Activated CD4-positive, alpha-beta T cell treated with anti-CD3 and anti-CD28 coated beads for 36 hours (primary cell): ENCODE measurements at regions of chr22 and their contacts with region 1.

Region 1: GRCh38 chr22:19576460-19577421 is 52.5 kb upstream of the CLDN5 start:
- DNase-seq: peak; percentile 86
- ATAC-seq: peak; percentile 88
- H3K4me3 Mint-ChIP-seq: peak overlapping the region; percentile 22
- H3K27ac Mint-ChIP-seq: peak overlapping the region; percentile 91
- H3K4me1 Mint-ChIP-seq: peaks cover 45% of the 10 kb centered on the region
- H3K27me3 Mint-ChIP-seq: no peaks in the 10 kb centered on the region

Region 2: GRCh38 chr22:19432133-19432851 is 144.4 kb before region 1 on chr22 and contains the start of gene MRPL40:
- CTCF ChIA-PET with region 1: no interaction called
- POLR2A ChIA-PET with region 1: no interaction called
- intact Hi-C with region 1: no loop called
- DNase-seq: peak; percentile 94
- ATAC-seq: peak; percentile 86
- H3K4me3 Mint-ChIP-seq: peak within 1 kb of the TSS; percentile 75
- H3K27ac Mint-ChIP-seq: peak within 1 kb of the TSS; percentile 96
- H3K4me1 Mint-ChIP-seq: peaks cover 43% of the 10 kb centered on the region
- H3K27me3 Mint-ChIP-seq: no peaks in the 10 kb centered on the region
- total RNA-seq, gene MRPL40: 34.1 to 34.4 TPM

Region 3: GRCh38 chr22:19543970-19544708 is 32.6 kb before region 1 on chr22:
- CTCF ChIA-PET with region 1: no interaction called
- POLR2A ChIA-PET with region 1: no interaction called
- intact Hi-C with region 1: no loop called
- DNase-seq: no peak
- ATAC-seq: no peak
- H3K4me3 Mint-ChIP-seq: no peak overlapping the region
- H3K27ac Mint-ChIP-seq: no peak overlapping the region
- H3K4me1 Mint-ChIP-seq: no peaks in the 10 kb centered on the region
- H3K27me3 Mint-ChIP-seq: peaks cover 2% of the 10 kb centered on the region

Region 4: GRCh38 chr22:19598054-19598855 is 21.5 kb after region 1 on chr22:
- CTCF ChIA-PET with region 1: interaction called, 3 read pairs
- POLR2A ChIA-PET with region 1: no interaction called
- intact Hi-C with region 1: loop called in 1 of 2 experiments (anchors 1 kb)
- DNase-seq: peak; percentile 49
- ATAC-seq: peak; percentile 31
- H3K4me3 Mint-ChIP-seq: no peak overlapping the region
- H3K27ac Mint-ChIP-seq: peak overlapping the region; percentile 89
- H3K4me1 Mint-ChIP-seq: peaks cover 61% of the 10 kb centered on the region
- H3K27me3 Mint-ChIP-seq: peaks cover 2% of the 10 kb centered on the region

Region 5: GRCh38 chr22:19645391-19645790 is 68.7 kb after region 1 on chr22:
- CTCF ChIA-PET with region 1: no interaction called
- POLR2A ChIA-PET with region 1: no interaction called
- intact Hi-C with region 1: no loop called
- DNase-seq: no peak
- ATAC-seq: no peak
- H3K4me3 Mint-ChIP-seq: no peak overlapping the region
- H3K27ac Mint-ChIP-seq: no peak overlapping the region
- H3K4me1 Mint-ChIP-seq: no peaks in the 10 kb centered on the region
- H3K27me3 Mint-ChIP-seq: peaks cover 11% of the 10 kb centered on the region

Region 6: GRCh38 chr22:19656541-19657251 is 80.0 kb after region 1 on chr22:
- CTCF ChIA-PET with region 1: no interaction called
- POLR2A ChIA-PET with region 1: no interaction called
- intact Hi-C with region 1: no loop called
- DNase-seq: no peak
- ATAC-seq: no peak
- H3K4me3 Mint-ChIP-seq: no peak overlapping the region
- H3K27ac Mint-ChIP-seq: no peak overlapping the region
- H3K4me1 Mint-ChIP-seq: no peaks in the 10 kb centered on the region
- H3K27me3 Mint-ChIP-seq: no peaks in the 10 kb centered on the region